ENCODE measurements at regions of chr22 and their contacts with region 1.

Region 1: GRCh38 chr22:24429411-24430365 is 2.3 kb downstream of the ADORA2A start:
- DNase-seq: peak in 2 of 3 donors; percentile 77 to 85
- ATAC-seq: peak in 1 of 2 donors; percentile 15
- H3K4me3 ChIP-seq: no peak overlapping the region
- H3K27ac ChIP-seq: no peak overlapping the region
- H3K4me1 ChIP-seq: peaks cover 27% of the 10 kb centered on the region
- H3K27me3 ChIP-seq: no peaks in the 10 kb centered on the region

Region 2: GRCh38 chr22:24230911-24231656 is 198.6 kb before region 1 on chr22:
- intact Hi-C with region 1: no loop called
- DNase-seq: peak in 2 of 3 donors; percentile 71 to 79
- ATAC-seq: peak; percentile 15 to 28
- H3K4me3 ChIP-seq: no peak overlapping the region
- H3K27ac ChIP-seq: no peak overlapping the region
- H3K4me1 ChIP-seq: no peaks in the 10 kb centered on the region
- H3K27me3 ChIP-seq: no peaks in the 10 kb centered on the region

Region 3: GRCh38 chr22:24503137-24503842 is 73.6 kb after region 1 on chr22:
- intact Hi-C with region 1: loop called in 2 of 4 experiments (anchors 5 kb)
- DNase-seq: peak; percentile 56 to 88 (median 76)
- ATAC-seq: peak; percentile 29 to 72
- H3K4me3 ChIP-seq: no peak overlapping the region
- H3K27ac ChIP-seq: no peak overlapping the region
- H3K4me1 ChIP-seq: no peaks in the 10 kb centered on the region
- H3K27me3 ChIP-seq: no peaks in the 10 kb centered on the region

Region 4: DNA sequence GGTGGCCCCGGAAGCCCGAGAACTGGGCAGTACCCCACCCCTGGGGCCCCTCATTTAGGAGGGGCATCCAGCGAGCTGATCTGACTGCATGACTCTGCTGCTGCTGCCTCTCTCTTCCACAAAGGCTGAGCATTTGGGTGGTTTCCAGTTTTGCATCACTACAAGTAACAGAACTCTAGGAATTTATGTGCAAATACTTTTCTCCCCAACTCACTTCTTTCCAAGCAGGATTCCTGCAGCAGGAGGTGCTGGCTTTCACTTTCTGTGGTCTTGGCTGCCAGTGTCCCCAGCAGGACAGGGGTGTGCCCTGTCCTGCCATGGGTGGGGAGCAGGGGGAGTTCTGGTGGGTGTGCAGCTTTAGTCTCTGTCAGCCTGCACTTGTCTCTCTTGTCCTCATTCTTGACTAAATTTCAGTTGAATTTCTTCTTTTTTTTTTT is 86.6 kb after region 1 on chr22:
- intact Hi-C with region 1: loop called in 3 of 4 experiments (anchors 5 to 10 kb)
- DNase-seq: no peak
- ATAC-seq: no peak
- H3K4me3 ChIP-seq: no peak overlapping the region
- H3K27ac ChIP-seq: no peak overlapping the region
- H3K4me1 ChIP-seq: peaks cover 2% of the 10 kb centered on the region
- H3K27me3 ChIP-seq: no peaks in the 10 kb centered on the region

Measured in right cardiac atrium (tissue), 5 donors.